Activated T-helper 2 cell treated with anti-CD3 and anti-CD28 coated beads, Interferon-gamma antibody, Interleukin-2, Interleukin-4, amounts not matched to agents 10 μg/mL and 5 μg/mL and 100 μg/mL, durations not matched to agents 14 hours and 24 hours and 36 hours (primary cell): ENCODE measurements at regions of chr12 and their contacts with region 1.

Region 1: GRCh38 chr12:6851921-6852650 is at the start of gene USP5:
- DNase-seq: peak; percentile 99
- H3K4me3 Mint-ChIP-seq: peak within 1 kb of the TSS; percentile 96
- H3K27ac Mint-ChIP-seq: peak within 1 kb of the TSS; percentile 97
- H3K4me1 Mint-ChIP-seq: peaks cover 34% of the 10 kb centered on the region
- H3K27me3 Mint-ChIP-seq: no peaks in the 10 kb centered on the region
- total RNA-seq, gene USP5: 133 and 134 TPM in 2 replicates

Region 2: DNA sequence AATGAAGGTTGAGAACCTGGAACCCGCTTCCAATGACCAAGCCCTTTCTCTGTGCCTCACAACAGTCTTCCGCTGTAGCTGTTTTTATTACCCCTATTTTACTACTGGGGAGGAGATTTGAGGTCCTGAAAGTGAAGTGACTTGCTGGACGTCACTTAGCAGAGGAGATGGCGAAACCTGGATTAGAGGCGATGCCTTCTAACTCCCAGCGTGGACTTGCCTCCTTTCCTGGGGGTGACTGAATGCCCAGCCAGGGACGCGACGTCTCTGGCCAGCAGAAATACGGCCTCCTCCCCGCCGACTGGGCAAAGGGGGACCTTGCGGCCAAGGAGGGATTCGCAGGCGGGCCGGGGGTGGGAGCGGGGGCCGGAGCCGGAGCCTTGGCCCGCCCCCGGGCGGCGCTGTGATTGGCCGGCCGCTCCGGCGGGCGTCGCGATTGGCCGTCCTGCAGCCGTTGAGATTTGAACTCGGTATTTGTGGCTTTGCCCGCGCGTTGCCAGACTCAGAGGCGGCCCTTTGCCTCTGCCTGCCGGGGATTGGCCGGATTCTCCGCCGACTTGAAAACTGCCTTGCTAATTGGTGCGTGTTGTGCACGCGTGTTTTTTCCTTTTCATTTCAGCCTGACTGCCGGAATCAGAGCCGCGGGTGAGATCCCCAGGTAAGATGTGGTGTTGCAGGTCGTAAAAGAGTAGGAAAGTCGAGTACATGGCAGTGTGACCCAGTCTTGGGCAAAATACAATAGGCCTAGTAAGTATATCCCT is 358.4 kb before region 1 on chr12 and contains the start of gene NCAPD2:
- intact Hi-C with region 1: loop called (anchors 5 kb)
- DNase-seq: peak; percentile 97
- H3K4me3 Mint-ChIP-seq: peak within 1 kb of the TSS; percentile 93
- H3K27ac Mint-ChIP-seq: peak within 1 kb of the TSS; percentile 97
- H3K4me1 Mint-ChIP-seq: peaks cover 29% of the 10 kb centered on the region
- H3K27me3 Mint-ChIP-seq: no peaks in the 10 kb centered on the region
- total RNA-seq, gene NCAPD2: 114 and 120 TPM in 2 replicates

Region 3: DNA sequence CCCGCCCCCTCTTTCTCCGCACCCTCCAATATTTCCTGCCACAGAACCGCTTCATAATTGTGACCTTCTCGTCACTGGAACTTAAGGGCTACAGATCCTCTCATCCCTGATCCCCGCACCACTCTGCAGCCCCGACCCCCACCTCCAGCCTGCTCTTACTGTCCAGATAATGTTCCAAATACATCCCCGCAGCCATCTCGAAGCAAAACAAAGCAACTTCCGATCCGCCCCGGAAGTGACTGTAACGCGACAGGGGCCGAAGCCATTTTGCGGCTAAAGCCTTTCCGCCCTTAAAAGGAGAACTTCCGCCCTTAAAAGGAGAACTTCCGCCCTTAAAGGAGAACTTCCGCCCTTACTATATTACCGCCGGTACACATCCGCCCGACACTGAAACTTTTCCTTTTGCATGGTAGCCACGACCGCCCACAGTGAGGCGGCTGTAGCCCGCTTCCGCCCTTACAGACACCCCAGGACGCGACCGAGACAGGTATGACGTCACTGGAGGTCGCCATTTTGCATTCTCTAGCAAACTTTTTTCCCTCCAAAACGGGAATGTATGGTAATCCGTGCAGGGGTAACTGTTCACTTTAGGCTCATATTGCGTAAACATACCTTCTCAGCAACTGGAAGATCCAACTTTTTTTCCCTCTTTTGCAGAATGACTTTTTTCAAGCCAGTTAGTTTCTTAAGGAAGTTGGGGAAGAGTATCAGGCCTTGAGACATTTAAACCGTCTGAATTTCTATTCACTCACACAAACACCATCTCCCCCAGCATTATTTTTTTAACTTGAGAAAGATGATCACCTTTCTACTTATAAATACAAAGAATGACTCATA is 189.0 kb before region 1 on chr12 and contains the start of gene ING4:
- intact Hi-C with region 1: loop called (anchors 1 kb)
- DNase-seq: peak; percentile 96
- H3K4me3 Mint-ChIP-seq: peak within 1 kb of the TSS; percentile 89
- H3K27ac Mint-ChIP-seq: peak within 1 kb of the TSS; percentile 91
- H3K4me1 Mint-ChIP-seq: peaks cover 17% of the 10 kb centered on the region
- H3K27me3 Mint-ChIP-seq: no peaks in the 10 kb centered on the region
- total RNA-seq, gene ING4: 18.5 and 19.1 TPM in 2 replicates

Region 4: GRCh38 chr12:6752921-6753771 is 98.9 kb before region 1 on chr12 and contains the start of gene MLF2:
- intact Hi-C with region 1: loop called (anchors 1 kb)
- DNase-seq: peak; percentile 97
- H3K4me3 Mint-ChIP-seq: peak within 1 kb of the TSS; percentile 94
- H3K27ac Mint-ChIP-seq: peak within 1 kb of the TSS; percentile 96
- H3K4me1 Mint-ChIP-seq: peaks cover 32% of the 10 kb centered on the region
- H3K27me3 Mint-ChIP-seq: no peaks in the 10 kb centered on the region
- total RNA-seq, gene MLF2: 162 and 172 TPM in 2 replicates

Region 5: DNA sequence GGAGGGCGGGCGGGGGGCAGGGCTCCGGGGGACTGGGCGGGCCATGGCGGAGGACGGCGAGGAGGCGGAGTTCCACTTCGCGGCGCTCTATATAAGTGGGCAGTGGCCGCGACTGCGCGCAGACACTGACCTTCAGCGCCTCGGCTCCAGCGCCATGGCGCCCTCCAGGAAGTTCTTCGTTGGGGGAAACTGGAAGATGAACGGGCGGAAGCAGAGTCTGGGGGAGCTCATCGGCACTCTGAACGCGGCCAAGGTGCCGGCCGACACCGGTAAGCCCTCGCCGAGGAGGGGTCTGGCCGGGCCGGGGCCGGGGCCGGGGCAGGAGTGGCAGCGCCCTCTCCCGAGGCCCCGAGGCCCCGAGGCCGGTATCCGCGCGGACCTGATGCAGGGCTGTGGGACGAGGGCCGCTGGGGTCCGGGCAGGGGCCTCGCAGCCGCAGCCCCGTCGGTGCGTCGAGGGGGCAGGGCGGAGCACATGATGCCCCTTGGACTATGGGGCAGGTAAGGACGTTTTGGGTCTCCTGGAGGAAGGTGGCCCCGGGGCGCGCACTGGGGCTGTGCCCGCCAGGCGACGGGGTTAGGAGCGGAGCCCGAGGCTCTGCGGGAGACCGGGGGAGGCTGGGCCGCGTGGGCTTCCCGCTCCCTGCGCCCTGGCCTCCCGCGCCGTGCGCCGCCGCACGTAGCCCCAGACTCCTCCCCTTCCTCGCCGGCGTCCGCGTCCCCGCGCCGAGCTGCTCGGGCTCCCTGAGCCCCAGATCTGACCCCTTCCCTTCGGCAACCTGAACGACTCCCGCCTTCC is 15.5 kb after region 1 on chr12 and contains the start of gene TPI1:
- intact Hi-C with region 1: loop called (anchors 1 kb)
- DNase-seq: peak; percentile 76
- H3K4me3 Mint-ChIP-seq: peak within 1 kb of the TSS; percentile 95
- H3K27ac Mint-ChIP-seq: peak within 1 kb of the TSS; percentile 97
- H3K4me1 Mint-ChIP-seq: peaks cover 46% of the 10 kb centered on the region
- H3K27me3 Mint-ChIP-seq: no peaks in the 10 kb centered on the region
- total RNA-seq, gene TPI1: 1,708 and 1,711 TPM in 2 replicates

Region 6: DNA sequence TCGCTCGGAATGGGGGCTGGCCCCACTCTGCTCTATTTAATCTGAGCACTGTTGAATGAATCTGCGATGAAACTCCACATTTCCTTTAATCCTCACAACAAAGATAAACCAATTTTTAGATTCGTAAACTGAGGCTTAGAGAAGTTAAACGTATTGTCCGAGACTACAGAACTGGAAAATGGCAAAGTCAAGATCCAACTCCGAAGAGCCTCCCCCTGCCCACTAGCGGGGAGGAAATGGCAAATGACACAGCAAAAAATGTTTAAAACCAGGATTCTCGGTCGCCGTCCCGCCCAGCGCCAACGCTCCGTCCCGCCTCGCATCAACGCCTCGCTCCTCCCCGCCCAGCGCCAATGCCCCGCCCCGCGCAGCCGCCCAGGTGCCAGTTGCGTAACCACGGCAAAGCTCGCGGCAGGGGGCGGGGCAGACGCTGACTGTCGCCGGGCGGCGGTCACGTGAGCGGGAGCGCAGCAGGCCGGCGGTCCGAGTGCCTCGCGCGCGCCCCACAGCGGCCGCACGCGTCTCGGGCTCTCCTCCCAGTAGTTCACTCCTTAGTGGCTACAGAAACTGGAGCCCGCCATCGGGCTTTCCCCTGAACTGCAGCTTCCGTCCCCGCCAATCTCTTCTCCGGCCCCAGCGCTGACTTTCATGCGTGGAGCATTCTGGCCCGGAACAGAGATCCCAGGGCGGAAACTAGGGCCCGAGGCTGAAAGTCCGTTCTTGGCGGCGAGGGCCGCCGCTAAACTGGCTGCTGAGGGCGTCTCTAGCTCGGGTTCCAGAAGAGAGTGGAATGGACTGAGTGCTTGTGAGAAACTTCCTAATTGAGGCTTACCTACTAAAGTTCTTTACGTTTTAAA is 38.9 kb after region 1 on chr12:
- intact Hi-C with region 1: loop called (anchors 1 kb)
- DNase-seq: peak; percentile 98
- H3K4me3 Mint-ChIP-seq: peak overlapping the region; percentile 80
- H3K27ac Mint-ChIP-seq: peak overlapping the region; percentile 92
- H3K4me1 Mint-ChIP-seq: peaks cover 13% of the 10 kb centered on the region
- H3K27me3 Mint-ChIP-seq: no peaks in the 10 kb centered on the region

Region 7: GRCh38 chr12:6944381-6945186 is 92.5 kb after region 1 on chr12:
- intact Hi-C with region 1: no loop called
- DNase-seq: peak; percentile 84
- H3K4me3 Mint-ChIP-seq: peak overlapping the region; percentile 84
- H3K27ac Mint-ChIP-seq: peak overlapping the region; percentile 99
- H3K4me1 Mint-ChIP-seq: peaks cover 50% of the 10 kb centered on the region
- H3K27me3 Mint-ChIP-seq: no peaks in the 10 kb centered on the region